Posterior vena cava (tissue), 2 donors: ENCODE measurements at regions of chr3 and their contacts with region 1.

Region 1: GRCh38 chr3:165464736-165465135 is 268.6 kb upstream of the SLITRK3 start:
- DNase-seq: no peak

Region 2: DNA sequence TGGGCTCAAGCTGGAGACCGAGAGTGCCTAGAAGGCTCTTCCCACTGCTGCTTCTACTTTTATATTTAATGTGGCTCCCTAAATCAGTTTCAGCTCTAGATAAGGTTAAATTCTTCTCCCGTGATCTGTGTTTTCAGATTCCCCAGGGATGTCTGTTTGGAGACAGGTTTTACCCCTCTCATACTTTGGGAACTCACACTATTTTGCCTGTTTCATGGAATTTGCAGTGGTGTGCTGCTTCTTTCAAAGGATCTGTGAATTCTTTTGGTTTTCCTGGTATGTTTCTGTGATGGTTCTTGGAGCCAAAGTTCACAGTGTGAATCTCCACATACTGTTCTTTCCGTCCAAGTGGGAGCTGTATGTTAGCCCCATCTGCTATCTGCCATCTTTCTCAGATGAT is 30.2 kb before region 1 on chr3:
- intact Hi-C with region 1: no loop called
- DNase-seq: no peak

Region 3: DNA sequence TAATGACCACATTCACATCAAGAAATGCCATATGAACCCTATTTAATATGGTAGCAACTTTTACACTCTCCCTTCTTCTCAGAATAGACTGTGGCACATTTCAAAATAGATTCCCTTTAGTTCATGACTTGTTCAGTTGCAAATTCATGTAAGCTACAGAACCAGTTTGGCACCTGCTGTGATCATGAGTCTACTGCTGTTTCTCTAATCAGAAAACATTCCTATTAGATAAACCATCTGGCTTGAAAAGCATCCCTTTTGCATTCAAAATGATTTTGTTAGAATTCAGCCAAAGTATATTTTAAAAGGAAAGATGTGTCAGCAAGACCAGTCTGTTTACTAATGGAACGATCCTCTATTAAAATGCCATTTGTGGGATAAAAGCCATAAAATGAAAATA is 68.1 kb after region 1 on chr3:
- intact Hi-C with region 1: loop called in 1 of 2 experiments (anchors 2 kb)
- DNase-seq: no peak

Region 4: DNA sequence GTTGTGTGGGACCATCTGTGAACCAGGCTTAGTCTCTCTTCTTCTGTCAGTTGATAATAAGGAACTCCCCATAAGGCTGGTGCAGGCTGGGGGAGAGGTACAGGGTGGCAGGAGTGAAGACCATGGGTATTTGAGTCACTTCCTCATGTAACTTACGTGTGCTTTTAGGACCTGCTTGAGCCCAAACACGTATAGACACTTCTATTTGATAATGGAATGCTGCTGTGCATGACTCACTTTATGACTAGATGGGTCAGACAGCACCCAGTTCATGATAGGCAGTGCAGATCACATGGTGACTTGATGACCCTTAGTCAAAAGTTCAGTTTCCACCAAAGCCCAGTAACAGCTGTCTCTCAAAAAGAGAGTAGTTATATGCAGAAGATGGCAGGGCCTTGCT is 1424.5 kb after region 1 on chr3:
- intact Hi-C with region 1: loop called in 1 of 2 experiments (anchors 5 kb)
- DNase-seq: no peak